Activated CD4-positive, alpha-beta T cell treated with anti-CD3 and anti-CD28 coated beads for 36 hours (primary cell): ENCODE measurements at regions of chr2 and their contacts with region 1.

Region 1: GRCh38 chr2:231900486-231900942 is 25.7 kb downstream of the NPPC start:
- DNase-seq: peak; percentile 83
- ATAC-seq: peak; percentile 68
- H3K4me3 Mint-ChIP-seq: no peak overlapping the region
- H3K27ac Mint-ChIP-seq: no peak overlapping the region
- H3K4me1 Mint-ChIP-seq: no peaks in the 10 kb centered on the region
- H3K27me3 Mint-ChIP-seq: no peaks in the 10 kb centered on the region

Region 2: DNA sequence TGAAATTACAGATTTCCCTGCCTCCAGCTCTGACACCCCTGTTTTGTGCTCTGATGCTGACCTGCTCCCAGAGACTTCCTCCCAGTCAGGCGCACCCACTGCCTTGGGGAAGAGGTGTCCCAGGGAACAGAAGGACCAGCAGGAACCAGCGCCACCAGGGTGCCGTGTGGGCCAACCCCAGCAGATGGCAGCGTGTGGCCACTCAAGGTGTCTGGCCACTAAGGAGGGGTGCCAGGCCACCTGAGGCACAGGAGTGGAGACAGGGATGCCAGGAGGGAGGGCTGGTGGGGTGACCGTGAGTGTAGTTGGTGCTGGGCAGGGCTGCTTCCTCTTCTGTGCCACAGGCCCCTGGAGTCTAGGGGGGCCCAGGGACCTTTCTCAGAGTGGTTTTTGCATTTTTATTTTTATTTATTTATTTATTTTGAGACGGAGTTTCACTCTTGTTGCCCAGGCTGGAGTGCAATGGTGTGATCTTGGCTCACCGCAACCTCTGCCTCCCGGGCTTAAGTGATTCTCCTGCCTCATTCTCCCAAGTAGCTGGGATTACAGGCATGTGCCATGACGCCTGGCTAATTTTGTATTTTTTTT is 251.8 kb before region 1 on chr2:
- CTCF ChIA-PET with region 1: no interaction called
- POLR2A ChIA-PET with region 1: no interaction called
- intact Hi-C with region 1: no loop called
- DNase-seq: peak; percentile 81
- ATAC-seq: peak; percentile 96
- H3K4me3 Mint-ChIP-seq: no peak overlapping the region
- H3K27ac Mint-ChIP-seq: no peak overlapping the region
- H3K4me1 Mint-ChIP-seq: peaks cover 2% of the 10 kb centered on the region
- H3K27me3 Mint-ChIP-seq: no peaks in the 10 kb centered on the region

Region 3: GRCh38 chr2:231854671-231855070 is 45.8 kb before region 1 on chr2:
- CTCF ChIA-PET with region 1: interaction called, 12 read pairs
- POLR2A ChIA-PET with region 1: no interaction called
- intact Hi-C with region 1: no loop called
- DNase-seq: no peak
- ATAC-seq: no peak
- H3K4me3 Mint-ChIP-seq: no peak overlapping the region
- H3K27ac Mint-ChIP-seq: no peak overlapping the region
- H3K4me1 Mint-ChIP-seq: no peaks in the 10 kb centered on the region
- H3K27me3 Mint-ChIP-seq: peaks cover 6% of the 10 kb centered on the region

Region 4: DNA sequence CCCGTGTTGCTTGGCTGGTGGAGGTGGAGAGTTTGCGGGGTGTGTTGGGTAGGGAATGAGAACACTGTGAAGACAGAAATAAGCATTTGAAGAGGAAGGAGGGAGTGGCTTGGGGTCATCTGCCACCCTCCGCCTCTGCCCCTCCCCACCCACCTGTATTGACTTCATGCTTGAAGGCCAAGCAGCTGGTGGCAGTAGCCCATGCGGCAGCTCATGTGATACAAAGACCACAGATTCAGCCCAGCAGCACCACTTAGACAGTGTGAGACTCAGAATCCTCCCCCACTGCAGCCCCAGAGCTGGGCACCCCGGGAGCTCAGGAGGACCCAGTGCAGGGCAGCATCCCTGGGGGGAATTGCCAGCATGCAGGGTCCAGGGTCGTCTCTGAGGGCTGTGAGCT is 10.3 kb after region 1 on chr2:
- CTCF ChIA-PET with region 1: interaction called, 17 read pairs
- POLR2A ChIA-PET with region 1: no interaction called
- intact Hi-C with region 1: no loop called
- DNase-seq: no peak
- ATAC-seq: no peak
- H3K4me3 Mint-ChIP-seq: no peak overlapping the region
- H3K27ac Mint-ChIP-seq: no peak overlapping the region
- H3K4me1 Mint-ChIP-seq: peaks cover 13% of the 10 kb centered on the region
- H3K27me3 Mint-ChIP-seq: no peaks in the 10 kb centered on the region

Region 5: DNA sequence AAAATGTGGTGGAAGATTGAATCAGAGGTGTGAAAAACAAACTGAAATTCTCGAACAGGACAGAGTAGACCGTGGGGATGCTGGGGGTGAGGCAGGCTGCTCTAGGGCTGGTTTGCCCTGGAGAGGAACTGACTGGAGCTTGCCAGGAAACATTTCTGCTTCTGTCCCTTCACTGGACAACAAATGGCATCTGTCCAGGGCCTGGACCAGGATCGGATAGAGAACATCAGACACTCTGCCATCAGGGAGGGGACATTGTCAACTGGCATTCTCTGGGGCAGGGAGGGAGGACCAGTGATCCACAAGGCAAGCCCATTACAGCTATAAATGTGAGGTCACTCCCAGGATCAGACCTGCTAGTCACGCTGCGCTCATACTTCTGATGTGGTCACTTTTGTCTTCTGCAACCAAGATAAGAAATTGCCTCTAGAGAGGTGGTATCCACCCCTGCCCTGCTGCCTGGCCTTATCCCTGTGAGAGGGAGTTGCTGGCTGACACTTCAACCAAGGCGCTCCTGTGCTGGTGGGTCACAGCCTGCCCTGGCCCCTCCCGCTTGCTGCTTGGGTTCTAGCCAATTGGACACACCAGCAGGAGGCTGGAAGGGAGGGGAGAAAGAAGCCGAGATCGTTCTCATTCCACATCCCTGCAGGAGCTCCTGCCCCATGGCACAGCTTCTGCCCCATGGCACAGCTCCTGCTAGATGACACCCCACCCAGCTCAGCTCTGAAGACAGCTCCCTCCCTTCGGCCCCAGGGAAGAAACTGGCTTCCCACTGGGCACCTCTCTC is 17.0 kb after region 1 on chr2:
- CTCF ChIA-PET with region 1: interaction called, 21 read pairs
- POLR2A ChIA-PET with region 1: no interaction called
- intact Hi-C with region 1: no loop called
- DNase-seq: peak; percentile 3
- ATAC-seq: peak; percentile 57
- H3K4me3 Mint-ChIP-seq: no peak overlapping the region
- H3K27ac Mint-ChIP-seq: no peak overlapping the region
- H3K4me1 Mint-ChIP-seq: peaks cover 6% of the 10 kb centered on the region
- H3K27me3 Mint-ChIP-seq: no peaks in the 10 kb centered on the region

Region 6: GRCh38 chr2:231951452-231952035 is 51.0 kb after region 1 on chr2:
- CTCF ChIA-PET with region 1: no interaction called
- POLR2A ChIA-PET with region 1: no interaction called
- intact Hi-C with region 1: no loop called
- DNase-seq: no peak
- ATAC-seq: no peak
- H3K4me3 Mint-ChIP-seq: no peak overlapping the region
- H3K27ac Mint-ChIP-seq: no peak overlapping the region
- H3K4me1 Mint-ChIP-seq: no peaks in the 10 kb centered on the region
- H3K27me3 Mint-ChIP-seq: peaks cover 12% of the 10 kb centered on the region